Prostate gland (tissue), 2 donors: ENCODE measurements at regions of chr1 and their contacts with region 1.

Region 1: GRCh38 chr1:101238681-101239094 is 1.9 kb downstream of the S1PR1 start:
- DNase-seq: peak; percentile 63
- H3K4me3 ChIP-seq: peak overlapping the region in 1 of 2 donors; percentile 20
- H3K27ac ChIP-seq: peak overlapping the region in 1 of 2 donors; percentile 10
- H3K4me1 ChIP-seq: no peaks in the 10 kb centered on the region
- H3K27me3 ChIP-seq: no peaks in the 10 kb centered on the region
- CTCF ChIP-seq: peak; percentile 73 to 86 (median 80)
- POLR2A ChIP-seq: no peak

Region 2: GRCh38 chr1:100921109-100921706 is 317.5 kb before region 1 on chr1:
- intact Hi-C with region 1: loop called (anchors 2 kb)
- DNase-seq: peak; percentile 18
- H3K4me3 ChIP-seq: no peak overlapping the region
- H3K27ac ChIP-seq: no peak overlapping the region
- H3K4me1 ChIP-seq: no peaks in the 10 kb centered on the region
- H3K27me3 ChIP-seq: no peaks in the 10 kb centered on the region
- CTCF ChIP-seq: peak; percentile 30 to 81 (median 74)
- POLR2A ChIP-seq: no peak

Region 3: GRCh38 chr1:101025657-101026504 is 212.8 kb before region 1 on chr1 and contains the start of gene DPH5:
- intact Hi-C with region 1: loop called (anchors 5 kb)
- DNase-seq: peak; percentile 84
- H3K4me3 ChIP-seq: peak within 1 kb of the TSS; percentile 55 to 56
- H3K27ac ChIP-seq: peak within 1 kb of the TSS; percentile 73
- H3K4me1 ChIP-seq: no peaks in the 10 kb centered on the region
- H3K27me3 ChIP-seq: no peaks in the 10 kb centered on the region
- CTCF ChIP-seq: peak in 1 of 4 experiments; percentile 10
- POLR2A ChIP-seq: no peak
- total RNA-seq, gene DPH5: 17.2 to 39.0 TPM

Region 4: DNA sequence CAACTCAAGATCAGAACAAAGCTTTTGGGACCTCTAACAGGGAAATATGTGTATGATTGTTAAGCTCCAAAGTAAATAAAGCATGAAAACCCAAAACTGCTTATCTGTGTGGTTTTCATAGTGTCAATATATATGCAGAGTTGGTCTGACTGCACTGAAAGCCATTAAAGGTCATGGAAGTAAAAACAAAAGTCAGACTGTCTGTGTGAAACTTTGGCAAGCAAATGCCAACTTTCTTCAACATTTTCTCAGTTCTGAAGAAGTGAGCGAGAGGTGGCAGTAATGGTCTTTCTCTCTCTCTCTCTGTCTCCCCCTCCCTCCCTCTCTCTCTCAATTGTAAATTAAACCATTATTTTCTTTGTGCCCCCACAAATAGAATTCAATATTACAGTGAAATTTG is 101.9 kb before region 1 on chr1:
- intact Hi-C with region 1: loop called (anchors 5 kb)
- DNase-seq: no peak
- H3K4me3 ChIP-seq: no peak overlapping the region
- H3K27ac ChIP-seq: no peak overlapping the region
- H3K4me1 ChIP-seq: no peaks in the 10 kb centered on the region
- H3K27me3 ChIP-seq: no peaks in the 10 kb centered on the region
- CTCF ChIP-seq: peak in 1 of 4 experiments; percentile 22
- POLR2A ChIP-seq: no peak

Region 5: GRCh38 chr1:101198842-101199636 is 39.6 kb before region 1 on chr1:
- intact Hi-C with region 1: loop called (anchors 5 kb)
- DNase-seq: no peak
- H3K4me3 ChIP-seq: no peak overlapping the region
- H3K27ac ChIP-seq: no peak overlapping the region
- H3K4me1 ChIP-seq: no peaks in the 10 kb centered on the region
- H3K27me3 ChIP-seq: no peaks in the 10 kb centered on the region
- CTCF ChIP-seq: no peak
- POLR2A ChIP-seq: no peak

Region 6: GRCh38 chr1:101288491-101288944 is 49.8 kb after region 1 on chr1:
- intact Hi-C with region 1: loop called (anchors 2 kb)
- DNase-seq: peak; percentile 72
- H3K4me3 ChIP-seq: no peak overlapping the region
- H3K27ac ChIP-seq: no peak overlapping the region
- H3K4me1 ChIP-seq: no peaks in the 10 kb centered on the region
- H3K27me3 ChIP-seq: no peaks in the 10 kb centered on the region
- CTCF ChIP-seq: peak; percentile 60 to 94 (median 81)
- POLR2A ChIP-seq: no peak

Region 7: DNA sequence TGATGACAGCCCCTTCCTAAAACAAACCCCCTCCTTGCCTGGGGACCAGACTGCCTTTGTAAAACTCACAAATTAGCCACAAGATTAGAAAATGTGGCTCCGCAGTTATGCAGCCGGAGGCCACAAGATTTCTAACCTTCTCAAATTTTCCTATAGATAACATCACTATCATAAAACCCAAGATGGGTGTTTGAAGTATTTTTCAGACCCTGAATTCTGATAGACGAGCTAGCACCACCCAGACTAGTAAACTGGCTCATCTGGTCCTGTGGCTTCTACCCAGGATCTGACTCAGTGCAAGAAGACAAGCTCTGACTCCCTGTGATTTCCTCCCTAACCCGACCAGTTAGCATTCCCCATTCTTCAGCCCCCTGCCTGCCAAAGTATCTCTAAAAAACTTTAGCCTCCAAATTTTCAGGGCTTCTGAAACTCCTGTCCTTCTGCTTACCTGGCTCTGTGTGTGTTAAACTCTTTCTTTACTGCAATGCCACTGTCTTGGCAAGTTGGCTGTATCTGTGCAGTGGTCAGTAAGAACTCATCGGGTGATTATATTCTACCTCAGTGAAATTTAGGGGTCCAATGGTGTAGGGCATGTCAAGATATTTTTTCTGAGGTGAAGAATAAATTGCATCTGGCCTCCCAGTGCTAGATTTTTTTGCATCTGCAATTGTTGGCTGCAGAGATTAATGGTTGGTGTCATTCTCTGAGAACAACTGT is 100.2 kb after region 1 on chr1:
- intact Hi-C with region 1: no loop called
- DNase-seq: no peak
- H3K4me3 ChIP-seq: no peak overlapping the region
- H3K27ac ChIP-seq: no peak overlapping the region
- H3K4me1 ChIP-seq: no peaks in the 10 kb centered on the region
- H3K27me3 ChIP-seq: no peaks in the 10 kb centered on the region
- CTCF ChIP-seq: no peak
- POLR2A ChIP-seq: no peak